Spleen (tissue), 13 donors: ENCODE measurements at regions of chr6 and their contacts with region 1.

Region 1: DNA sequence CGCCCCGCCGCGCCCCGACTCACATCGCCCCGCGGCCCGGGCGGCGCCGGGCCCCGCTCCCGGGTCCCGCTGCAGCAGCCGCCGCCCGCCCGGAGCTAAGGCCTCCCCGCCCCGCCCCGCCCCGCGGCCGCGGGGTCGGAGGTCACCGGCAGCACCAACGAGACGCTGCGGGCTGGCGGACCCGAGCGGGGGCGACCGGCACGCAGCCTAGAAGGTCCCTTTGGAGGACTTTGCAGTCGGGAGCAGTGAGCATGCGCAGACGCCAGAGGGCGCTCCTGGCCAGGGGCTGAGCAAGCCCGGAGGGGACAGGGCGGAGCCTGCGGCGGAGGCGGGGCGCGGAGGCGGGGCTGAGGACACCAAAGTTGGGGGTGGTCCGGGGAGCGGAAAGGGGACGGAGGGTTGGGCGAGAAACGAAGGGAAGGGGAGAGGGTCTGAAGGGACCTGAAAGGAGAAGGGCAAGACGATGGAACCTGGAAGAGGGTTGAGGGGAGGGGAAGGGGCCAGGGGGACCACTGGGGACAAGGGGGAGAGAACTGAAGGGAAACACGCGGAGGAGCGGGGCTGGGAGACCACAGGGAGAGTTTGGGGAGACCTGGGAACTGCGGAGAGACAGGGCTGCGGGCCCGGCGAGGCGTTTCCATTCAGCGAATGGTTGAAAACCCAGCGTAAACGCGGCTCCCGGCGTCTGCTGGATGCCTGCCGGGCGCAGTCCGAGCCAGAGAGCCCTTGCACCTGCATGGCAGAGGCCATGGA is at the start of gene FRS3:
- DNase-seq: peak; percentile 100
- H3K4me3 ChIP-seq: peak within 1 kb of the TSS; percentile 71 to 93 (median 81)
- H3K27ac ChIP-seq: peak within 1 kb of the TSS; percentile 19 to 95 (median 84)
- H3K4me1 ChIP-seq: peaks cover 13 to 88% (median 52%) of the 10 kb centered on the region in 6 donors
- H3K27me3 ChIP-seq: peaks cover 0 to 7% (median 0%) of the 10 kb centered on the region in 7 donors
- CTCF ChIP-seq: peak; percentile 92 to 99 (median 96)
- POLR2A ChIP-seq: no peak
- total RNA-seq, gene FRS3: 3.7 to 7.3 (median 6.3) TPM

Region 2: GRCh38 chr6:41602864-41603608 is 176.9 kb before region 1 on chr6:
- intact Hi-C with region 1: loop called (anchors 10 kb)
- DNase-seq: peak; percentile 90
- H3K4me3 ChIP-seq: no peak overlapping the region
- H3K27ac ChIP-seq: no peak overlapping the region
- H3K4me1 ChIP-seq: peaks cover 0 to 12% (median 10%) of the 10 kb centered on the region in 6 donors
- H3K27me3 ChIP-seq: peaks cover 0 to 20% (median 0%) of the 10 kb centered on the region in 7 donors
- CTCF ChIP-seq: peak; percentile 67 to 95 (median 85)
- POLR2A ChIP-seq: no peak

Region 3: DNA sequence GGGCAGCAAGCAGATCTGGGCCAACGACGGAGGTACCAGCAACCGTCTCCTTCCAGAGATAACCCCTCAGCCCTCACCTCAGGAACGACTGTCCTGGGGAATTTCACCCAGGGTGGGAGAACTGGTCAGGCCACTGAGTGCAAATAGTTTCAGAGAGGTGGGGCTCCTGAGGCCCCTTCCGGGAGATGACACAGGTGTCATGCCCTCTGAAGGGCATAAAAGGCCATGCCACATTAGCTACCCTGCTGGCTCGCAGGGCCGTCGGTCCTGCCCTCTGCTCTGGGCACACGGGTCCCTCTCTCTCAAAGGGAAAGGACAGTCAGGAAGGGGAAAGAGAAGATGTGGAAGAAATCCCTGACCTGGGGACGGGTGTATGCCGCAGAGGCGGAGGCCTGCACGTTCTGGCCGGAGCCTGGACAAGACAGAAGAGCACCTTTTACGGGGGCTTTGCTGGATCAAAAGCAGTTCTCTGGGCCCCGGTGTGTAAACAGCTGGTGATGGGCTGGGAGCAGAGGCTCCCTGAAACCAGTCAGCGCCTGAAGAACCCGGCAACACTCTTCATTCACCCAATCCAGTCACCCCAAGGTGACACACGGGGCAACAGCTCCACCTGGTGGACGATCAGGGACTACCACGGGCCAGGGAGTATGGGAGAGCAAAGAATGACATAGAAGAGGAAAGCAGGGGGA is 264.0 kb after region 1 on chr6:
- intact Hi-C with region 1: loop called (anchors 5 kb)
- DNase-seq: peak; percentile 95
- H3K4me3 ChIP-seq: peak overlapping the region in 6 of 8 donors; percentile 9 to 98 (median 80)
- H3K27ac ChIP-seq: peak overlapping the region in 7 of 8 donors; percentile 87 to 96 (median 95)
- H3K4me1 ChIP-seq: peaks cover 61 to 97% (median 88%) of the 10 kb centered on the region in 6 donors
- H3K27me3 ChIP-seq: no peaks in the 10 kb centered on the region
- CTCF ChIP-seq: peak; percentile 95 to 99 (median 98)
- POLR2A ChIP-seq: no peak